H1 (cell line): ENCODE measurements at regions of chr14 and their contacts with region 1.

Region 1: GRCh38 chr14:91858215-91858905 is 9.0 kb downstream of the TC2N start:
- DNase-seq: no peak
- H3K4me3 ChIP-seq: no peak overlapping the region
- H3K27ac ChIP-seq: no peak overlapping the region
- H3K4me1 ChIP-seq: peaks cover 4 to 14% (median 9%) of the 10 kb centered on the region in 4 experiments; a peak in 6 of 7 replicates
- H3K27me3 ChIP-seq: no peaks in the 10 kb centered on the region
- CTCF ChIP-seq: no peak
- EP300 ChIP-seq: no peak
- POLR2A ChIP-seq: no peak
- RAD21 ChIP-seq: no peak

Region 2: GRCh38 chr14:91872517-91873470 is 14.4 kb after region 1 on chr14:
- CTCF ChIA-PET with region 1: interaction called, 10 read pairs
- POLR2A ChIA-PET with region 1: no interaction called
- DNase-seq: no peak
- H3K4me3 ChIP-seq: no peak overlapping the region
- H3K27ac ChIP-seq: no peak overlapping the region
- H3K4me1 ChIP-seq: no peaks in the 10 kb centered on the region
- H3K27me3 ChIP-seq: no peaks in the 10 kb centered on the region
- CTCF ChIP-seq: no peak
- EP300 ChIP-seq: no peak
- POLR2A ChIP-seq: no peak
- RAD21 ChIP-seq: no peak

Region 3: DNA sequence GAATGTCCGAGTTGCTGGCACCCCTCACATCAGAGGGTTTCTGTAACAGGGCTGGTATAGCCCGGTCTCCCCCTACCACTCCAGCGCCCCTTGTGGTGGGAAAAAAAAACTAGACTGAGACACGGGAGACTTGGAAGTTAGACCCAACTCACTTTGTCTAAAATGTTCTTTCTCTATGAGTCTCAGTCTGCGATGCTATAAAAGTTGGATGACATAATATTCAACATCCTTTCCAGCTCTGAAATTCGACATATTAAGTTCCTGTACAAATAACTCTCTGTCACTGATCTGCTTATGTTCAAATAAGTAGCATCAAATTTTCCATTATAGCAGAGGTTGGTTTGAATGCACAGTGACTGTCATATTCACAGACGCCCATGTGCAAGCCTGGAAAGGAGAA is 34.6 kb after region 1 on chr14:
- CTCF ChIA-PET with region 1: interaction called, 10 read pairs
- POLR2A ChIA-PET with region 1: no interaction called
- DNase-seq: peak in 1 of 2 experiments; percentile 82
- H3K4me3 ChIP-seq: no peak overlapping the region
- H3K27ac ChIP-seq: no peak overlapping the region
- H3K4me1 ChIP-seq: peaks cover 0 to 4% (median 1%) of the 10 kb centered on the region in 4 experiments; a peak in 3 of 7 replicates
- H3K27me3 ChIP-seq: no peaks in the 10 kb centered on the region
- CTCF ChIP-seq: peak; percentile 74 to 82 (median 76)
- EP300 ChIP-seq: no peak
- POLR2A ChIP-seq: no peak
- RAD21 ChIP-seq: peak; percentile 68 to 73